ENCODE measurements at regions of chr11 and their contacts with region 1.

Region 1: GRCh38 chr11:17077520-17078401 is at the start of gene RPS13:
- DNase-seq: peak; percentile 97
- H3K4me3 Mint-ChIP-seq: peak within 1 kb of the TSS; percentile 93
- H3K27ac Mint-ChIP-seq: peak within 1 kb of the TSS; percentile 97
- H3K4me1 Mint-ChIP-seq: peaks cover 27% of the 10 kb centered on the region
- H3K27me3 Mint-ChIP-seq: no peaks in the 10 kb centered on the region
- total RNA-seq, gene RPS13: 2,045 to 2,099 TPM

Region 2: DNA sequence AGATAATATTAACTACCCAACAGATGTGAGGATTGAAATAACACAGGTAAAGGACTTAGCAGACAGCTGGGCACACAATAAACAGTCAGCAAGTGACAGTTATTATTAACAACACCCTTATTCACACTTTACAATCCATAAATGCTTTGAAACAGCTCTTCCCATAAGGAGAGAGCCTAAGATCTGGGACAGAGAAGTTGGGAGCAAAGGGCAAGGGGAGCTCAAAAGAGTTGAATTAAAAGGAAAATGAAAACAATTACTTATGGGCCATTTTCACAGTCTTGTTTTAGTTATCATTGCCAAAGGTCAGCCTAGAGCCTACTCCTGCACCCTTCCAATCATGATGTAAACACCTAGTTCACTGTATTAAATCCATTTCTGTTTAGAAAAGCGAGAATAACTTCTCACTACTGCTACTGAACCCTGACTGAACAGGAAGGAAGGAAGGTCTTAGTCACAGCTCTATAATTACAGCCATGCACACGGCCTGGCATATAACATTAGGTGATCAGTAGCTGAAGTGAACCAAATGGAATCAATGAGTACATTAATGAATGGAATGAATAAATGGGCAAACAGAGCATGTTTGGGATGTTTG is 174.9 kb before region 1 on chr11:
- CTCF ChIA-PET with region 1: interaction called, 6 read pairs
- intact Hi-C with region 1: loop called (anchors 1 kb)
- DNase-seq: peak; percentile 30
- H3K4me3 Mint-ChIP-seq: peak overlapping the region; percentile 3
- H3K27ac Mint-ChIP-seq: peak overlapping the region; percentile 92
- H3K4me1 Mint-ChIP-seq: peaks cover 43% of the 10 kb centered on the region
- H3K27me3 Mint-ChIP-seq: no peaks in the 10 kb centered on the region

Region 3: DNA sequence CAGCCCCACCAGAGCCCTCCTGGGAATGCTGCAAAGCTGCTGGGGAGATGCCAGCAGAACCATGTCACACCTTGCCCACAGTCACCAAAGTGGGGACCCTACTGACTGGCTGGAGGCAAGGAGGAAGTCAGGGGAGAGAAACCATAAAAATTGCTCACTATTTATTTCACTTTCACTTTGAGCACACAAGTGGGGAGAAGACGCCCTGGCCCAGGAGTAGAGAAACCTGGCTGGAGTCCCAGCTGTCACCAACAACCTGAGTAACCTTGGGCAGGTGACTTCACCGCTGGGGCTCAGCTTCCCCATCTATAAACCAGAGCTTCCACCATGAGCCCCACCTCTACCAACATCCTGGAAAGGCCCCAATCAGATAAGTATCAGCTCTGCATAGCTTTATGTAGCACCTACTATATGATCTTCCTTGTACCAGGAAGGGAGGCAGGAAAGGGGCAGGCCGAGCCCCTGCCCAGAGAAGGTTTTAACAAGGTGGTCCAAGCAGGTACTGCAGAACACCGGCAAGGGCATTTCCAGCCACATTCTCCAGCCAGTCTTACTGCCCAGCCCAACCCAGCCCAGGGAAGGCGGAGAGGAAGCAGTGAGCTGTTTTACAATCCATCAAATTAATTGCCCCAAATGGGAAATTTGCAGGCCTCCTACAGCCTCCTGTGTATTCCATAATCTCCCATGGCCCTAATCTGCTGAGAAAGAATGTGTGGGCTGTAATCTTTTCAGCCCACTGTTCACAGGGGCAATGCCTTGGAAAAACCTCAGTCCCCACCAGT is 91.1 kb before region 1 on chr11:
- CTCF ChIA-PET with region 1: interaction called, 3 read pairs
- intact Hi-C with region 1: loop called (anchors 1 kb)
- DNase-seq: peak; percentile 82
- H3K4me3 Mint-ChIP-seq: no peak overlapping the region
- H3K27ac Mint-ChIP-seq: no peak overlapping the region
- H3K4me1 Mint-ChIP-seq: peaks cover 26% of the 10 kb centered on the region
- H3K27me3 Mint-ChIP-seq: no peaks in the 10 kb centered on the region

Region 4: DNA sequence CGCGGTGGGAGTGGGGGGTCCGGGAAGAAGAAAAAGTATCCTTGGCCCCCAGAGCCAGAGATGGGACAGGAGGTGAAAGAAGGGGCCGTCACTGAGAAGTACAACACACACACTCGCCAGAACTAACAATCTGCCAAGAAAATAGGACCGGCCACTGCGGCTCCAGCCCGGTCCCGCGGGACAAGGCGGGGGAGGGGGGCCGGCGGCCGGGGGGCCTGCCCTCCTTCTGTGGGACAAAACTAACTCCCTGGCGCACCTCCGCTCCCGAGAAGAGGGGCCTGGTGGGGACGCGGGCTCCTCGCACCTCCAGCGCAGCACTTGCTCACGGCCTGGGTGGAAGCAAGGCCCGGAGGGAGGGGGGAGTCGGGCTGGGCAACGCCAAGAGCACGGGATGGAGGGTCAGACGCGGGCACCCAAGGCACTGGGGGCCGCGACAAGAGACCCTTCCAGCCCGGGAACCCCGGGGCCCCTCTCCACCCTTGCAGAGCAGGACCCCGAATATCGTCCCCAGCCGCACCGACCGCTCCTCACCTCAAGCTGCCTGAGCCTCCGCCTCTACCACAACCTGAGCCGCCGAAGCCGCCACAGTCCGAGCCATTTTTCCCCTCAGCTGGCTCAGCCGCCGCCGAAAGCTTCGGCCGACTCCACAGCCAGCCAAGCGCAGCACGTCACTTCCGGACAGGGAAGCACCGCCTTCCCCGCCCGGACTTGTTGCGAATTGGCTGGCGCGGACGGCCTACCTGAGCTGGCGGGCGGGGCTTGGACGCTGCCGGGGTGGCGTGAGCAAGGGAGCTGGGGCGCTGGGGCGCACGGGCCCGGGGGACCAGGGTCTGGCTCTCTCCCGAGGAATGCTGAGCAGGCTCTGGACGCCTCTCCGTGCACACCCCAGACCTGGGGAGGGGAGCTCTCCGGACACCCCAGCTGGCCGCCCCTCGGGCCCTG is 129.8 kb after region 1 on chr11 and contains the start of gene PIK3C2A:
- CTCF ChIA-PET with region 1: interaction called, 3 read pairs
- intact Hi-C with region 1: loop called (anchors 1 kb)
- DNase-seq: peak; percentile 97
- H3K4me3 Mint-ChIP-seq: peak within 1 kb of the TSS; percentile 99
- H3K27ac Mint-ChIP-seq: peak within 1 kb of the TSS; percentile 92
- H3K4me1 Mint-ChIP-seq: peaks cover 30% of the 10 kb centered on the region
- H3K27me3 Mint-ChIP-seq: no peaks in the 10 kb centered on the region
- total RNA-seq, gene PIK3C2A: 16.4 to 17.3 TPM

Region 5: DNA sequence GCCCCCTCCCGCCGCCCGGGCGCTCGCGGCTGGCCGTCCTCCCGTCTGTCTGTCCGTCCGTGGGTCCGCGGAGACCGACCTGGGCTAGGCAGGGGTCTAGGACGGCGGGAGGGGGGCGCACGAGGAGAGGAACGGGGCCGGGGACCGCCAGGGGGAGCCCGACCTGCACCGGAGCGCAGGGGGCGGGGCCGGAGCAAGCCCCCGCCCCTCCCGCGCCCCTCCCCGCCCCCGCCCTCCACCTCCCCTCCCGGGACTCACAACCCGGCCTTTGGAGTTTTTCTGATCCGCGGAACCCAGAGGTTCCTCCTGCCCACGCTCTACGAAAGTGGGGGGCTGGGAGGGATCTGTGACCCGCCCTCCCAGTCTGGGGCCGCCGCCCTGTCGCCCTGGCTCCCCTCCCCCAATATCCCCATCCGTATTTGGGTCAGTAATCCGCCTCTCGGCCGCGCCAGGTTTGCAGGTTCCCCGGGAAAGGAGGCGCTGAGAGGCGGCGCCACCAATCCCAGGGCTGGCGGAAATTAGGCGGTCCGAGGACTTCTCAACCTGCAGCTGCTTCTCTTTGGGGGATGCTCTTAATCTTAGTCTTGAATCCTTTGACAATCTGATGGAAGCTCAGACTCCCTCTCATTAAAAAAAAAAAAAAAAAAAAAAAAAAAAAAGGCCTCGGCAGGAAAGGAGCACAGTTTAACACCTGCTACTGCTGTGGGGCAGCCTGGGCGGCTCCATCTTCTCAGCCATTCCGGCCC is 311.6 kb after region 1 on chr11:
- CTCF ChIA-PET with region 1: no interaction called
- intact Hi-C with region 1: loop called (anchors 1 kb)
- DNase-seq: peak; percentile 75
- H3K4me3 Mint-ChIP-seq: peak overlapping the region; percentile 71
- H3K27ac Mint-ChIP-seq: no peak overlapping the region
- H3K4me1 Mint-ChIP-seq: peaks cover 5% of the 10 kb centered on the region
- H3K27me3 Mint-ChIP-seq: no peaks in the 10 kb centered on the region

Measured in activated naive CD4-positive, alpha-beta T cell treated with anti-CD3 and anti-CD28 coated beads for 36 hours (primary cell).